ENCODE measurements at regions of chr12 and their contacts with region 1.

Region 1: GRCh38 chr12:6195665-6196535 is 4.3 kb upstream of the CD9 start:
- DNase-seq: peak in 1 of 2 donors; percentile 97
- H3K4me3 ChIP-seq: no peak overlapping the region
- H3K27ac ChIP-seq: peak overlapping the region; percentile 58
- H3K4me1 ChIP-seq: peaks cover 31% of the 10 kb centered on the region
- H3K27me3 ChIP-seq: no peaks in the 10 kb centered on the region
- CTCF ChIP-seq: peak; percentile 95 to 99 (median 99)
- POLR2A ChIP-seq: no peak

Region 2: DNA sequence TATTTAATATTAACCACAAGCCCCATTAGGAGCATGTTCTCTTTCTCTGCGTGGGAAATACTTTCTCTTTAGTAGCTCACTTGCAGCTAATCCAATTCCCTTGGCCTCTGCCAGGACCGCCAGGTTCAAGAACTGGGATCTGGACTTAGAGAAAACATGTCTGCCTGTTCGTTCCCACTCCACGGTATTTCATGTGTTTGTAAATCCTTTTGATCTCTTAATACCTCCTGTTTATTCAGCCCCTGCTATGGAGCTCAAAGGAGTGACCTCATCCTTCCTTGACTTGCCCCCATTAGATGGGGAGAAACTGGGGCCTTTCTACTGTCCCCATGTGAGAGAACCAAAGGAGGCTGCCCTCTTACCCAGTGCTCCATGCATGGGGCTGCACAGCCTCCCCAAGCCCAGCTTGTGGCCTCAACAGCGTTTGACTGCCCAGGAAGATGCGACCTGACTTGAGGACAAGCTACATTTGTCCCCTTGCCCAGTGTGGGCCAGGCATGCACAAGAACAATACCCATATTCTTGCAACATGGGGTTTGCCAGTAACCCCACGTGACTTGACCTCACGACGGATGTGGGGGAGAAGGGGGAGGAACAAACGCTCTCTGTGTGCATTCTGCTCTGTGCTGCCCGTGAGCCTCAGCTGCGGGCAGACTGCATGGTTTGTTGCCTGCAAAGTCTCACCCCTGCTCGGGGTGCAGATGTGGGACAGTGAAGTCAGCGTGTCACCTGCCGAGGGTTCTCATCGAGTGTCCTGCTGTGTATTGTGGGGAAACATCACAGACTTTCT is 34.6 kb after region 1 on chr12:
- intact Hi-C with region 1: loop called (anchors 5 kb)
- DNase-seq: no peak
- H3K4me3 ChIP-seq: peak overlapping the region; percentile 2 to 3
- H3K27ac ChIP-seq: peak overlapping the region; percentile 93
- H3K4me1 ChIP-seq: peaks cover 100% of the 10 kb centered on the region
- H3K27me3 ChIP-seq: no peaks in the 10 kb centered on the region
- CTCF ChIP-seq: no peak
- POLR2A ChIP-seq: no peak

Region 3: GRCh38 chr12:6250343-6250742 is 54.4 kb after region 1 on chr12:
- intact Hi-C with region 1: no loop called
- DNase-seq: no peak
- H3K4me3 ChIP-seq: no peak overlapping the region
- H3K27ac ChIP-seq: no peak overlapping the region
- H3K4me1 ChIP-seq: peaks cover 20% of the 10 kb centered on the region
- H3K27me3 ChIP-seq: no peaks in the 10 kb centered on the region
- CTCF ChIP-seq: no peak
- POLR2A ChIP-seq: no peak

Region 4: DNA sequence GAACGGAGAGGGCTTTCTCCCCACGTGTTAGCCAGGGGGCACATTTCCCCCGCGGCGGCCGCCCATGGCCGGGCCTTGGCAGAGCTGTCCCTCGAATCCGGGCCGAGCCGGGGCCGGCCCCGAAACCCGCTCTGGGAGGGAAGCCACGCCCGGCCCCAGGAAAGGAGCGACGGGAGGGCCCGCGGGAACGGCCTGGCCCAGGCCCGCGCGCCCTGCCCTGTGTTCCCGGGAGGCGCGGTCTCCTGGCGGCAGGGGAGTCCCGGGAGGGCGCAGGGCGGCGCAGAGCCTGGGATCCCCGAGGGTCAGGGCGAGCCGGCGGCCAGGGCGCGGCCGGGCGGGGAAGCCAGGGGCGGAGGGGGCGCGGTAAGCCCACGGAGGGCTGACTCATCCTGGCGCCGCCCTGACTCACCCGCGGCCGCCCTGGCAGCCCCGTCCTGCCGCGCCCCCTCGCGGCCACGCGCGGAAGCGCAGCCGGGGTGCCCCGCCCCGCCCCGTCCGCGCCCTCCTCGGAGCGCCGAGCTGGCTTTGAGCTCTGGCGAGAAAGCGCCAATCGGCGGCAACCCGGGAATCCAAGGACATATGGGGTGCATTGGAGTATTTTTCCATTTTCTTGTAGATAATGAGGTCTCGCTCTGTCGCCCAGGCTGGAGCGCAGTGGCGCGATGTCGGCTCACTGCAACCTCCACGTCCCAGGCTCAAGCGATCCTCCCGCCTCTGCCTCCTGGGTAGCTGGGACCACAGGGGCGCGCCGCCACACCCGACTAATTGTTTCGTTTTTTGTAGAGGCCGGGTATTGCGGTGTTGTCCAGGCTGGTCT is 82.7 kb after region 1 on chr12:
- intact Hi-C with region 1: loop called (anchors 1 kb)
- DNase-seq: no peak
- H3K4me3 ChIP-seq: peak overlapping the region; percentile 35 to 61
- H3K27ac ChIP-seq: peak overlapping the region; percentile 86
- H3K4me1 ChIP-seq: peaks cover 47% of the 10 kb centered on the region
- H3K27me3 ChIP-seq: no peaks in the 10 kb centered on the region
- CTCF ChIP-seq: peak; percentile 64 to 94 (median 75)
- POLR2A ChIP-seq: peak in 1 of 2 donors; percentile 23

Region 5: DNA sequence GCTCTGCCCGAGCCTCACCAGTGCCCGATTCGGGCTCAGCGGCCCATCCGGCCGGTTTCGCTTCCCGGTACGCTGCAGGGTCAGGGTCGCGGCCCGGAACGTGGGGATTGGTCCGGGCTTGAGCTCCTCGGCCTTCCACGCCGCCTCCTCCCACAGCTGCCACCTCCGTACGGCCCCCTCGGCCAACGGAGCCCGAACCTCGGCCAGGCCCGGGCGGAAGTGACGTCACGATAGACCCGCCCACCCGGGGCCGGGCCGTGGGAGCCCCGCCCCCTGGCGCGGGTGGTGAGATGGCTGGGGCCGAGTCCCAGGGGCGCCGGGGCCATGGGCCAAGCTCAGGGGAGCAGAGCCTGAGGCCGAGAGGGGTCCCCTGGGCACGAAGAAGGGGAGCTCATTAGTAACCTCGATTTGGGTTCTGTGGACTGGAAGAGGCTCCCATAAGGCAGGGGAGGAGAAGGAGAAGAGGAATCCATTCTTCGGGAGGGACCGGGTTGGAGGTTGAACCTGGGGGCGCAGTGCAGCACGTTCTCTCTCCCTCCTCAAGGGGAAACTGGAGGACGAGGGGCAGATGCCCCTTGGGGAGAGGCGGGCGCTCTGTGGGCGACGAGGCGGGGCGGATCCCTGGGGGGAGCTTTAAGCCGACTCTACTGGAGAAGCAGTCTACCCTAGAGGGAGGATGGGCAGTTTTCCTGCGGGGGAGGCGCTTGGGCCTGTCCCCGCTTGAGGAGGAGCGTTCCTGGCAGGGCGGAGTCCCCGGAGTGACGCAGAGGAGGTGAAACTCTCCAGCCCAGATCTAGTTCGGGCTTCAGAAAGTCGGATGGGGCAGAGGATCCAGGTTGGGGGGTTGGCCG is 557.2 kb after region 1 on chr12 and contains the start of gene MLF2:
- intact Hi-C with region 1: loop called (anchors 10 kb)
- DNase-seq: peak in 1 of 2 donors; percentile 99
- H3K4me3 ChIP-seq: peak within 1 kb of the TSS; percentile 70 to 91
- H3K27ac ChIP-seq: peak within 1 kb of the TSS; percentile 100
- H3K4me1 ChIP-seq: peaks cover 15% of the 10 kb centered on the region
- H3K27me3 ChIP-seq: no peaks in the 10 kb centered on the region
- CTCF ChIP-seq: peak in 1 of 3 experiments; percentile 92
- POLR2A ChIP-seq: peak; percentile 95 to 96
- total RNA-seq, gene MLF2: 150 TPM

Region 6: GRCh38 chr12:7486512-7486911 is 1290.6 kb after region 1 on chr12:
- intact Hi-C with region 1: no loop called
- DNase-seq: no peak
- H3K4me3 ChIP-seq: no peak overlapping the region
- H3K27ac ChIP-seq: no peak overlapping the region
- H3K4me1 ChIP-seq: no peaks in the 10 kb centered on the region
- H3K27me3 ChIP-seq: no peaks in the 10 kb centered on the region
- CTCF ChIP-seq: no peak
- POLR2A ChIP-seq: no peak